ENCODE measurements at regions of chr2 and their contacts with region 1.

Region 1: GRCh38 chr2:96509114-96509846 is 4.1 kb upstream of the NEURL3 start:
- DNase-seq: peak in 4 of 9 donors; percentile 32 to 79 (median 44)
- ATAC-seq: peak; percentile 64
- H3K4me3 ChIP-seq: no peak overlapping the region
- H3K4me3 Mint-ChIP-seq: peak overlapping the region in 7 of 10 donors; percentile 3 to 66 (median 40)
- H3K27ac ChIP-seq: no peak overlapping the region
- H3K27ac Mint-ChIP-seq: peak overlapping the region in 5 of 9 donors; percentile 28 to 74 (median 66)
- H3K4me1 ChIP-seq: peaks cover 3 to 4% of the 10 kb centered on the region in 2 donors
- H3K4me1 Mint-ChIP-seq: peaks cover 8 to 51% (median 13%) of the 10 kb centered on the region in 7 donors
- H3K27me3 ChIP-seq: no peaks in the 10 kb centered on the region
- H3K27me3 Mint-ChIP-seq: peaks cover 3 to 25% (median 17%) of the 10 kb centered on the region in 5 donors

Region 2: DNA sequence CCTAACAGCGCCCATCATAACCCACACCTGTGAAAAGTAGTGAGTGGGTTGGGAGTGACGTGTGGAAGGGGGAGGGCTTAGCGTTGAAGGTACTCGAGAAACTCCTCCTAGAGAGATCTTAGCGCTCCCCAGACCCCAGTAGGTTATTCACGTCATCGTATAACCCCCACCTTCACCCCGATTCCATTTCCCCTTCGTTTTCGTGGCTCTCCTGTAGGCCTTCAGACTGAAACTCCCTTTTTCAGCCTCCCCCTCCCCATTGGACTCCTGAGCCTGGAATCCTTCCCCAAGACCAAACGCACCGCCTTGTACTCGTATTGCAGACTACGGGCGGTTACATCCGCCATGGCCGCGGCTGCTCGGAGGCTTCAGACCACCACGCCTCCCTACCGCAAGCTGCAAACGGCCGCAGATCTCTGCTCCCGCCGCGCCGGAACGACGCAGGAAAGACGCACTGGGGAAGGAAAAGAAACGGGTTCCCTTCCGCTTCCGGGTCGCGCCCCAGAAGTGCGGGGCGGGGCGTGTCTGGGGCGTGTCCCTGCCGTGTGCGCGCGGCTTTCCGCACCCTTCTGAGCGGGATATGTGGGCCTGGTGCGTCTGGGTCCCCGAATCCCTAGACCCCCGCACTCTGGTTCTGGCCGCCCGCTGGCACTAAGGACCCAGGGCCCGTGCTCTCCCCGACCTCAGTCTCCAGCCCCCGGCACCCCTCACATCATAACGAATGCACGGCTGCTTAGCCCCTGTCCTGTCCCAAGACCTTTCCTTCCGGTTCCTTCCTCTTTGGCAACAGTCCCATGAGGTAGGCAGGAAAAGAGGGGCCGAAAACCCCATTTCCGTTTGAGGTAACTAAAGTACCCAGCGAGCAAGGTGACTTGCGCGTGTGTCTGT is 203.9 kb before region 1 on chr2 and contains the start of gene SNRNP200:
- CTCF ChIA-PET with region 1: interaction called, 3 read pairs
- POLR2A ChIA-PET with region 1: interaction called, 3 read pairs
- intact Hi-C with region 1: loop called in 1 of 2 experiments (anchors 1 kb)
- DNase-seq: peak; percentile 77 to 92 (median 90)
- ATAC-seq: peak; percentile 96
- H3K4me3 ChIP-seq: peak within 1 kb of the TSS; percentile 85
- H3K4me3 Mint-ChIP-seq: peak within 1 kb of the TSS; percentile 94 to 100 (median 99)
- H3K27ac ChIP-seq: peak within 1 kb of the TSS; percentile 94
- H3K27ac Mint-ChIP-seq: peak within 1 kb of the TSS; percentile 97 to 100 (median 99)
- H3K4me1 ChIP-seq: peaks cover 30 to 41% of the 10 kb centered on the region in 2 donors
- H3K4me1 Mint-ChIP-seq: peaks cover 41 to 61% (median 58%) of the 10 kb centered on the region in 7 donors
- H3K27me3 ChIP-seq: no peaks in the 10 kb centered on the region
- H3K27me3 Mint-ChIP-seq: no peaks in the 10 kb centered on the region
- total RNA-seq, gene SNRNP200: 165 to 255 (median 212) TPM

Region 3: GRCh38 chr2:96407041-96407918 is 102.0 kb before region 1 on chr2:
- CTCF ChIA-PET with region 1: interaction called, 28 read pairs
- POLR2A ChIA-PET with region 1: interaction called, 28 read pairs
- intact Hi-C with region 1: loop called (anchors 1 kb)
- DNase-seq: peak; percentile 48 to 92 (median 88)
- ATAC-seq: peak; percentile 94
- H3K4me3 ChIP-seq: peak overlapping the region; percentile 49
- H3K4me3 Mint-ChIP-seq: peak overlapping the region; percentile 67 to 91 (median 83)
- H3K27ac ChIP-seq: peak overlapping the region; percentile 33
- H3K27ac Mint-ChIP-seq: peak overlapping the region; percentile 89 to 100 (median 96)
- H3K4me1 ChIP-seq: peaks cover 19 to 31% of the 10 kb centered on the region in 2 donors
- H3K4me1 Mint-ChIP-seq: peaks cover 18 to 51% (median 36%) of the 10 kb centered on the region in 7 donors
- H3K27me3 ChIP-seq: no peaks in the 10 kb centered on the region
- H3K27me3 Mint-ChIP-seq: no peaks in the 10 kb centered on the region

Region 4: GRCh38 chr2:96485751-96486651 is 23.3 kb before region 1 on chr2:
- CTCF ChIA-PET with region 1: no interaction called
- POLR2A ChIA-PET with region 1: interaction called, 3 read pairs
- intact Hi-C with region 1: loop called (anchors 1 kb)
- DNase-seq: peak; percentile 46 to 83 (median 72)
- ATAC-seq: peak; percentile 93
- H3K4me3 ChIP-seq: peak overlapping the region; percentile 71
- H3K4me3 Mint-ChIP-seq: peak overlapping the region; percentile 87 to 97 (median 94)
- H3K27ac ChIP-seq: peak overlapping the region; percentile 84
- H3K27ac Mint-ChIP-seq: peak overlapping the region; percentile 94 to 100 (median 98)
- H3K4me1 ChIP-seq: peaks cover 6 to 14% of the 10 kb centered on the region in 2 donors
- H3K4me1 Mint-ChIP-seq: peaks cover 11 to 62% (median 29%) of the 10 kb centered on the region in 7 donors
- H3K27me3 ChIP-seq: no peaks in the 10 kb centered on the region
- H3K27me3 Mint-ChIP-seq: peaks cover 0 to 4% (median 2%) of the 10 kb centered on the region in 5 donors

Region 5: DNA sequence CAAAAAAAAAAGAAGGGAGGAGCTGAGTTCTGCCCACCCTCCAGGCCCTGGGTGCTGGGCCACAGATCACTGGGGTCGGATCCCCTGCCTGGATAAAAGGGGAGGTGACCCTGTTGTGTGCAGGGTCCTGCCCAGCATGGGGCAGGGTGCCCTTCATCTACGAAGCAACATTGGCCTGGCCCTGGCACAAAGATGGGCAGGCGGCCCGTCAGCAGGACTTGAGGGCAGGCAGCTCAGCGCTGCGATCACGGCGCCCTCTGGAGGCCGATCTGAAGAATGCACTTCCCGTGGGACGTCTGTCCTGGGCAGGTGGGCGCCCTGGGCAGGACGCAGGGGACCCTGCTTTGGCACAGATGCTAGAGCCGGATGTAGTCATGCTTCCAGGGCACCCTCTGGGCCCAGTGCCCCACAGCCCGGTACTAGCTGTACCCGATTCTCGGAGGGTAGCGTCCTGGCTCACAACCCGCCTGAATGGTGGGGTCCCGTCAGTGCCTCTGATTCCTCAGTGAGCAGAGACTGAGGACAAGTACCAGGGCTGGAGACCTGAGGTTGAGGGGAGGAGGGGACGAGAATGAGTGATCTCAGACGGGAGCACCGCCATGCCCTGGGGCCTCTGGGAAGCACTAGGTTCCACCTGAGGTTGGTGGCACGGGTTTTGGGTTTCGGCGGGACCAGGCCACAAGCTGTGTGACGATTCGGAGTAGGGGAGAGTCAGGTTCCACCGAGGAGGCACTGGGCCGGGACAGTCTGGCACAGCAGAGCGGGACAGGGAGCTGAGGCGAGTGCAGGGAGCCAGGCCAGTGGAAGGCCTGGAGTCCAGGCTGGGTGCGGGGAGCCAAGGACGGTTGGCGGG is 45.2 kb after region 1 on chr2:
- CTCF ChIA-PET with region 1: interaction called, 8 read pairs
- POLR2A ChIA-PET with region 1: no interaction called
- intact Hi-C with region 1: loop called (anchors 1 kb)
- DNase-seq: peak; percentile 46 to 80 (median 73)
- ATAC-seq: peak; percentile 76
- H3K4me3 ChIP-seq: no peak overlapping the region
- H3K4me3 Mint-ChIP-seq: peak overlapping the region in 7 of 10 donors; percentile 3 to 67 (median 32)
- H3K27ac ChIP-seq: no peak overlapping the region
- H3K27ac Mint-ChIP-seq: peak overlapping the region; percentile 33 to 88 (median 71)
- H3K4me1 ChIP-seq: peaks cover 4 to 7% of the 10 kb centered on the region in 2 donors
- H3K4me1 Mint-ChIP-seq: peaks cover 0 to 30% (median 15%) of the 10 kb centered on the region in 7 donors
- H3K27me3 ChIP-seq: no peaks in the 10 kb centered on the region
- H3K27me3 Mint-ChIP-seq: peaks cover 0 to 2% (median 0%) of the 10 kb centered on the region in 5 donors